HepG2 (cell line): ENCODE measurements at regions of chr10 and their contacts with region 1.

Region 1: DNA sequence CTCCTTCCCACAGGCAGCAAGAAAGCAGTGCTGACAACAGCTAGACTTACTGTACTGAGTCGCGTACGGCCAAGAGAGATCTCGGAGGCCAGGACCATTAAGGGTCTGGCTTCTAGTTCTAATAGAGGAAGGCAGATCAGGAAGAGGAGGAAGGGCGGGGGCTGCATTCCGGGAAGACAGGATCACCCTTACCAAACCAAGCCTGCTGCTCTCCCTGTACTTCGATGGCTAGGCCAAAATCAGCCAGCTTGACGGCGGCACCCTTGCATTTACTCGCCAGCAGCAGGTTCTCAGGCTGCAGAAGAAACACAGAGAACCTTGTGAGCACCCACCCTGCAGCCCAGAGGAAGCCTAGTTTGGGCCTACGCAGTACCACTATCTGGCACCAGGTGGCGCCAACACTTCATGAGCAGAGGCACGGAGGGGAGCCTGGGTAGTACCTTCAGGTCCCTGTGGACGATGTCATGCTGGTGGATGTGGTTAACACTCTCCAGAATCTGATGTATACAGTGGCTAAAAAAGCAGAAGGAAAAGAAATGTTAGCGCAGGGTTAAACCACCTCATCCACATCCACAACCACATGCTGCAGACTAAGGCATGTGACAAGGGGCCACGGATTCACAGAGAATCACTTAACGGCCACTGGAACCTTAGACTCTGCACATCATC is 25.4 kb downstream of the CAMK2G start:
- DNase-seq: peak; percentile 62
- ATAC-seq: peak; percentile 93
- H3K4me3 ChIP-seq: no peak overlapping the region
- H3K27ac ChIP-seq: no peak overlapping the region
- H3K4me1 ChIP-seq: peaks cover under 1% of the 10 kb centered on the region; the same call in 1 of the 2 replicates
- H3K27me3 ChIP-seq: no peaks in the 10 kb centered on the region
- CTCF ChIP-seq: peak; percentile 97
- EP300 ChIP-seq: no peak
- POLR2A ChIP-seq: no peak
- RAD21 ChIP-seq: peak; percentile 94

Region 2: GRCh38 chr10:73879296-73880173 is 30.6 kb after region 1 on chr10:
- CTCF ChIA-PET with region 1: interaction called, 60 read pairs
- POLR2A ChIA-PET with region 1: interaction called, 4 read pairs
- in situ Hi-C with region 1: loop called (anchors 5 kb)
- intact Hi-C with region 1: loop called (anchors 1 kb)
- DNase-seq: peak; percentile 74
- ATAC-seq: peak; percentile 90
- H3K4me3 ChIP-seq: no peak overlapping the region
- H3K27ac ChIP-seq: no peak overlapping the region
- H3K4me1 ChIP-seq: peaks cover 39% of the 10 kb centered on the region
- H3K27me3 ChIP-seq: no peaks in the 10 kb centered on the region; a peak in 2 of 5 replicates
- CTCF ChIP-seq: peak; percentile 96
- EP300 ChIP-seq: no peak
- POLR2A ChIP-seq: no peak
- RAD21 ChIP-seq: peak; percentile 90